Right ventricle myocardium superior (tissue), 1 donor: ENCODE measurements at regions of chr19 and their contacts with region 1.

Region 1: GRCh38 chr19:31676271-31677004 is 327.2 kb upstream of the TSHZ3 start:
- DNase-seq: no peak
- ATAC-seq: peak; percentile 59

Region 2: GRCh38 chr19:31560086-31561060 is 116.1 kb before region 1 on chr19:
- intact Hi-C with region 1: no loop called
- DNase-seq: no peak
- ATAC-seq: no peak

Region 3: DNA sequence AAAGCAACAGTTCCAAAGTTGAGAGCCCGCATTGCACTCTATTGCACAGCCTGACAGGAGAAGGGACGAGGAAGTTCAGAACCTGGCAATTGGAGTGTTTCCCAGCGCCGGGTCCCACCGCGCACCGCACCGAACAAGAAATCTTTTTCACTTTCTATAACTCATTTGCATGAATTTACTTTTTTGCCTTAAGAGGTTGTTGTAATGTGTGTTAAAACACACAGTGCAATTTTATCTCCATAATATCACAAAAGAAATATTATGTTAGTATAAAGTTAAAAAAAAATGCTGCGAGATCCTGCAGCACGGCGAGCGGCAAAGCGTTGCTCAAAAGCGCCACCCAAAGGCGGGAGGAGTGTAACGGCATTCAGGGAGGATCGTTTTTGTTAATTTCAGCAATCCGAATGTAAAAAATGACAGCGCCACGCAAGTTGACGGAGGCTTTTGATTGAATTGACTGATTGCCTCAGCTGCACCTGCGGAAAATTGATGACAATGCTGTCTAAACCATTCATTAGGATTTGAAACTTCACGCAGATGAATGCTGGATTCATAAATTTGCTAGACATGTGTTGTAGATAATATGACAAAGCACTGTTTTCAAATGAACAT is 365.3 kb after region 1 on chr19:
- intact Hi-C with region 1: loop called (anchors 5 kb)
- DNase-seq: peak; percentile 45
- ATAC-seq: peak; percentile 53

Region 4: GRCh38 chr19:32224371-32225244 is 548.2 kb after region 1 on chr19:
- intact Hi-C with region 1: loop called (anchors 10 kb)
- DNase-seq: peak; percentile 74
- ATAC-seq: peak; percentile 98